Activated CD8-positive, alpha-beta memory T cell treated with anti-CD3 and anti-CD28 coated beads, Interleukin-2, amount 10 ng/mL, durations not matched to agents 7 days and 5 days (primary cell): ENCODE measurements at regions of chr1 and their contacts with region 1.

Region 1: DNA sequence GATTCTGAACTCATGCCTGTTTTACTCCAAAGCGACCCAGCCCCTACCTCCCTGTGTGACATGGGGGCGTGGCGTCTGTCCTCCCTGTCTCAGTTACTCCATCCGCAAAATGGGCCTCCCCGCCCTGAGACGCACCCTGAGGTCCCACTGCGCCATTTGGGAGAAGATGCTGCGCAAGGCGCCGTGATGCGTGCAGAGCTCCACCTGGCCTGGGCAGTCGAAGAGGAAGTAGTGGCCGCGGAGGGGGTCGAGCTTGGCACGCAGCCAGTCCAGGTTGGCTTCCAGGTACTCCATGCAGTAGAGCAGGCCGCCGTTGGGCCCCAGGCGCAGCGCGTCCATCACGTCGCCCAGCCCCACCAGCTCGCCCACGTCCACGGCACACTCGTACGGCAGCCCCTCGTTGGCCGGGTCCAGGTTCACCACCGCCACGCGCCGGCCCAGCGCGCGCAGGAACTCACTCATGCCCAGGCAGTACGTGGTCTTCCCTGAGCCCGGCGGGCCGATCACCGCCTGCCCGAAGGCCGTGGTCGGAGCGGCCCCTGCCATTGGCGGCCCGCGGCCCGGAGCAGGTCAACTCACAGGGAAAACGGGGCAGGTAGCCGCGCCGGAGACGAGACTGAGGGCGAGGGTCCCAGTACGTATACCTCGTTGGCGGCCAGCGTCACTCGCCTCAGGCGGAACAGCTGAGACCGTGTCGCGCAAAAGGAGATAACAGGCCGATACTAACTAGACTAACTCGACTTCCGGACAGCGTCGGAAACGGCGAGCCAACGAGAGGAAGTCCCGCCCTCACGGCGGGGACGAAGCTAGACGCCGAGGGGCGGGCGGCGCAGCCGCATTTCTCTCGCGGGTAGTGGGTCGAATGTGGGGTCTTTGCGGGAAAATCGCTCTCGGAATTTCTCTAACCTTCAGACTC is at the start of gene GPN2:
- DNase-seq: peak; percentile 88
- ATAC-seq: peak; percentile 98
- H3K4me3 Mint-ChIP-seq: peak within 1 kb of the TSS; percentile 92
- H3K27ac Mint-ChIP-seq: peak within 1 kb of the TSS; percentile 91
- H3K4me1 Mint-ChIP-seq: peaks cover 32% of the 10 kb centered on the region
- H3K27me3 Mint-ChIP-seq: no peaks in the 10 kb centered on the region
- total RNA-seq, gene GPN2: 32.9 to 41.1 TPM

Region 2: DNA sequence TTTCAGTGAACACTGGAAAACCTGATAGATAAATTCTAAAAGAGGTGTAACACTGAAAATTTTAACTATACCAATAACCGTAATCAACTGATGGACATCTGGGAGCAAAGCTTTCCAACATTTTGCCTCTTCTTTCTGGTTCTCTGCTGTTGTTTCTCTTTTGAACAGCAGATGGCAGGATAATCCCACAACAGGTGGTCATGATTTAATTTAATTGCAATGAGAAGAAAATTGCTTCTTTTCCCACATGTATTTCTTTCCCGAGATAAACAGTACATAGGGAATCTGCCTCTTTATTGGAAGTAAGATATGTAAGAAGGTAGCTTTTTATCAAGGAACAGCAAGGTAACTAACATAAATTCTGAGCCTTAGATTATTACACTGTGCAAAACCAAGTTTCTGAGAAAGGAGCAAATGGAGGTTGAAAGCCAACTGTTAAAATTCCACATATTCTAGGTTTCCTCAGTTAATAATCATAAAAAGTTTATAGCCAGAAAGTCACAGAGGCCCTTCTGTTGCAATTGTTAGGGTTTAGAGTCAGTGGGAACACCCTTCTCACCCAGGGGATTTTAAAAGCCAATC is 287.3 kb before region 1 on chr1:
- CTCF ChIA-PET with region 1: interaction called, 10 read pairs
- DNase-seq: no peak
- ATAC-seq: no peak
- H3K4me3 Mint-ChIP-seq: no peak overlapping the region
- H3K27ac Mint-ChIP-seq: no peak overlapping the region
- H3K4me1 Mint-ChIP-seq: peaks cover 15% of the 10 kb centered on the region
- H3K27me3 Mint-ChIP-seq: peaks cover 28% of the 10 kb centered on the region

Region 3: DNA sequence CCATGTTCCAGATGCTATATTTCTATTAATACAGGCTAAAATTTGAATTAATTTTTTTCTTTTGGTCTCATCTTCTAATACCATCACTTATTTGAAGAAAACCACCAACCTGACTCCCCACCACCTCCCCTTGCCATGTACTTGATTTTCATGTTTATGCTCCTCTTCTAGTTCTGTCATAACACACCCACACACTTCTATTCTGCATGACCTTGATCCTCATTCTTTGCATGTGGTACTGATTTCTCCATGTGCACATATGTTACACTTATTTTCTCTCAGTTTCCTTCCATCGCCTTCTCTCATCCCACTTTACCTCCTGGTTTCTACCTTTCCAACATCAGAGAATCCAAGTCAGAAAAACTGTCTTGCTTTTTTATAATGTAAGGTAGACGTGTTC is 272.9 kb before region 1 on chr1:
- CTCF ChIA-PET with region 1: no interaction called
- DNase-seq: no peak
- ATAC-seq: no peak
- H3K4me3 Mint-ChIP-seq: no peak overlapping the region
- H3K27ac Mint-ChIP-seq: no peak overlapping the region
- H3K4me1 Mint-ChIP-seq: peaks cover 20% of the 10 kb centered on the region
- H3K27me3 Mint-ChIP-seq: peaks cover 1% of the 10 kb centered on the region

Region 4: GRCh38 chr1:26856604-26857469 is 33.0 kb before region 1 on chr1:
- CTCF ChIA-PET with region 1: interaction called, 10 read pairs
- DNase-seq: no peak
- ATAC-seq: no peak
- H3K4me3 Mint-ChIP-seq: no peak overlapping the region
- H3K27ac Mint-ChIP-seq: peak overlapping the region; percentile 50
- H3K4me1 Mint-ChIP-seq: peaks cover 3% of the 10 kb centered on the region
- H3K27me3 Mint-ChIP-seq: no peaks in the 10 kb centered on the region

Region 5: DNA sequence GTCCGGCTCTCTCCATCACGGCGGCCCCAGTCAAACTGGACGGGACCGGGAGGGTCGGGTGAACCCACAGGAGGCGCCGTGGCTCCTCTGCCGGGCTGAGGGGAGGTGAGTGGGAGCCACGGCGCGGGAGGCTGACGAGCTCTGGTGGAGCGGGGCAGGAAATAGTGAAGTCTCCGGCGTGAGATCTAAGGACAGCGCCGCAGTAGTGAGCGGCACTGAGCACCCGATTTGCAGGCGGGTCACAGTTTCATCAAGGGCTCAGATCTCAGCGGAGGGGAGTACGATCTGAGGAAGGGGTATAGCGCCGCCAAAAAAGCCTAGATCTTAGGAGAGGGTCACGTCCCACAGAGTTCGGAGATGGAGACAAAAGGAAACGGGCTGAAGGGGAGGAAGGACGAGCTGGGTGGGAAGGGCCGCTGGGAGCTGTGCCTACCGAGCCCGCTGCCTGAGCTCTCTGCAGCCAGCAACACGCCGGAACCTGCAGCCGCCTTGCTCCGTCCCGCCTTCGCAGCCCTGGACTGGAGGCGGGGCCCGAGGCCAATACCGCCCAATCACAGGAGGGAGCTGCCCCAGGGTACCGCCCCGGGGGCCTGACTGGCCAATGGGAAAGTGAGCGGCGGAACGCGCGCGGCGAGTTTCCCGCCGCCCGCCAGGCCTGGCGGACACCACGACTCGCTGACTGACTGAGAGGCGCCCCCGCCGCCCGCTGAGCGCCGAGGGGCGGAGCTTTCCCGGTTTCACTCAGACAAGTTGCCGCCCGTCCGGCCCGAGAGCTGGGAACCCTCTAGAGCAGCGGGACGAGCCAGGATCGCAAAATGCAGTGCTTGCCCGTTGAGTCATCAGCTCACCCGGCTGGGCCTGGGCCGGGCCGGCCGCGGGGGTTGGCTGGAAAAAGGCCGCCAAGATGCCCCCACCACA is 24.9 kb before region 1 on chr1:
- CTCF ChIA-PET with region 1: interaction called, 24 read pairs
- DNase-seq: peak; percentile 97
- ATAC-seq: peak; percentile 95
- H3K4me3 Mint-ChIP-seq: peak overlapping the region; percentile 84
- H3K27ac Mint-ChIP-seq: peak overlapping the region; percentile 87
- H3K4me1 Mint-ChIP-seq: peaks cover 29% of the 10 kb centered on the region
- H3K27me3 Mint-ChIP-seq: no peaks in the 10 kb centered on the region

Region 6: DNA sequence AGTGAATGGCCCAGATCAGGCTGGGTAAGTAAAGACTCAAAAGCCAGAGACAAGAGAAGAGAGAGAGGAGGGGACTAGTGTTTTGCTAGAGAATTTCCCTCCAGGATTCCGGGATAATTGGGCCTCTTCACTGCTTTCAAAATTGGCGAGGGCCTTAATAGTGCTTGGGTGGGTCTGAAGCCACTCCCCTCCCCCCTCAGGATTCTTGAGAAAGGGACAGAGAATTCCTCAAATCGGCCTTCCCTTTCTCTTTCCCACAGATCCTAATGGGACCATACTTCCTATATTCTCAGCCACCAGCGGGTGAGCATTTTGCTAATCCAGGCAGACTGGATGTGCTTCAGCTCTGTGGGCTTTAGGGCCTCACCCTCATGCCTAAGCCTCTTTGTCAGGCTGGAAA is 14.9 kb before region 1 on chr1:
- CTCF ChIA-PET with region 1: interaction called, 35 read pairs
- DNase-seq: no peak
- ATAC-seq: no peak
- H3K4me3 Mint-ChIP-seq: no peak overlapping the region
- H3K27ac Mint-ChIP-seq: peak overlapping the region; percentile 24
- H3K4me1 Mint-ChIP-seq: peaks cover 6% of the 10 kb centered on the region
- H3K27me3 Mint-ChIP-seq: no peaks in the 10 kb centered on the region

Region 7: GRCh38 chr1:26900001-26900814 is 10.4 kb after region 1 on chr1 and contains the start of gene GPATCH3:
- CTCF ChIA-PET with region 1: interaction called, 23 read pairs
- DNase-seq: peak; percentile 94
- ATAC-seq: peak; percentile 95
- H3K4me3 Mint-ChIP-seq: peak within 1 kb of the TSS; percentile 86
- H3K27ac Mint-ChIP-seq: peak within 1 kb of the TSS; percentile 98
- H3K4me1 Mint-ChIP-seq: peaks cover 34% of the 10 kb centered on the region
- H3K27me3 Mint-ChIP-seq: no peaks in the 10 kb centered on the region
- total RNA-seq, gene GPATCH3: 15.0 to 17.0 TPM

Region 8: DNA sequence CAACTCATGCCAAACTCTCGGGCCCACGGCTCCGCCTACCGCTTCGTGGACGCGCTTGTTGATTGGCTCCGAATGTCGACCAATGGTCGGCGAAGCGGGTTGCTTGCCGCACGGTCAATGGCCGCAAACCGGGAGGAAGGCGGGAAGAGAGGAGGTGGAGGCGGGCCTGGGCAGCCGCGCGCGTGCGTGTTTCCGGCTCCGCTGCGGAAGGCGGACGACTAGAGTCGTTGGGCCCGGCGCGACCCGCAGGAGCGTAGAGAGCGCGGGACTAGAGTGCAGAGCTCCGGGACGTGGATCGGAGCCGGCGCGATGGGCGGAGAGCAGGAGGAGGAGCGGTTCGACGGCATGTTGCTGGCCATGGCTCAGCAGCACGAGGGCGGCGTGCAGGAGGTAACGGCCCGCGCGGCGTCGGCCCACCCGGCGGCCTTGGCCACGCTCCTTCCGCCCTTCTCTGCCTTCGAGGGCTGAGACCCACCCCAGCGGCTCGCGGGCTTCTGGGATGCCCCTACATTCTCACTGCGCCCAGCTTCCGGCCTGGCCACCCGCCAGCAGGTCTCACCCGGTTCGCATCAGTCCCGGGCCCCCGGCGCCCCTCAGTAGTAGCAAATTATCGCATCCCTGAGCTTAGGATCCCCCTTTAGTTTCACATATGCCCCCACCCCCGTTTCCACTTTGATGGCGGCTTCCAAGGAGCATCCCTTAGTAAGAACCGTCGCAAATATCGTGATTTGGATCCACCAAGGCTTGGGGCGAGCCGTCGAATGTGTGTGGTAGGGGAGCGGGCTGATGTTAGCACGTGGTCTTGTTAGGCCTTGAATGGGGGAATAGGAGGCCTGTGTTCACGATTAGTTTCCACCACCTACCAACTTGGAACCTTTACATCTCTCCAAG is 32.0 kb after region 1 on chr1 and contains the start of gene NUDC:
- CTCF ChIA-PET with region 1: interaction called, 12 read pairs
- DNase-seq: peak; percentile 99
- ATAC-seq: peak; percentile 96
- H3K4me3 Mint-ChIP-seq: peak within 1 kb of the TSS; percentile 91
- H3K27ac Mint-ChIP-seq: peak within 1 kb of the TSS; percentile 95
- H3K4me1 Mint-ChIP-seq: peaks cover 40% of the 10 kb centered on the region
- H3K27me3 Mint-ChIP-seq: no peaks in the 10 kb centered on the region
- total RNA-seq, gene NUDC: 88.8 to 91.6 TPM

Region 9: GRCh38 chr1:26993237-26994019 is 103.6 kb after region 1 on chr1 and contains the start of gene TRNP1:
- CTCF ChIA-PET with region 1: no interaction called
- DNase-seq: peak; percentile 72
- ATAC-seq: peak; percentile 72
- H3K4me3 Mint-ChIP-seq: peak within 1 kb of the TSS; percentile 61
- H3K27ac Mint-ChIP-seq: no peak within 1 kb of the TSS
- H3K4me1 Mint-ChIP-seq: peaks cover 17% of the 10 kb centered on the region
- H3K27me3 Mint-ChIP-seq: peaks cover 68% of the 10 kb centered on the region
- total RNA-seq, gene TRNP1: 0.15 to 0.19 TPM